ENCODE measurements at regions of chr17 and their contacts with region 1.

Region 1: DNA sequence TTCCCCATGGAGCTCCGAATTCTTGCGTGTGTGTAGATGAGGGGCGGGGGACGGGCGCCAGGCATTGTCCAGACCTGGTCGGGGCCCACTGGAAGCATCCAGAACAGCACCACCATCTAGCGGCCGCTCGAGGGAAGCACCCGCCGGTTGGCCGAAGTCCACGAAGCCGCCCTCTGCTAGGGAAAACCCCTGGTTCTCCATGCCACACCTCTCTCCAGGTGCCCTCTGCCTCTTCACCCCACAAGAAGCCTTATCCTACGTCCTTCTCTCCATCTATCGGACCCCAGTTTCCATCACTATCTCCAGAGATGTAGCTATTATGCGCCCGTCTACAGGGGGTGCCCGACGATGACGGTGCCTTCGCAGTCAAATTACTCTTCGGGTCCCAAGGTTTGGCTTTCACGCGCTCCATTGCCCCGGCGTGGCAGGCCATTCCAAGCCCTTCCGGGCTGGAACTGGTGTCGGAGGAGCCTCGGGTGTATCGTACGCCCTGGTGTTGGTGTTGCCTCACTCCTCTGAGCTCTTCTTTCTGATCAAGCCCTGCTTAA is 617 bp upstream of the SENP3 start:
- DNase-seq: peak; percentile 98
- H3K4me3 ChIP-seq: peak overlapping the region; percentile 73 to 97 (median 86)
- H3K27ac ChIP-seq: peak overlapping the region; percentile 89 to 98 (median 97)
- H3K4me1 ChIP-seq: peaks cover 0 to 70% (median 64%) of the 10 kb centered on the region in 4 donors
- H3K27me3 ChIP-seq: no peaks in the 10 kb centered on the region
- CTCF ChIP-seq: peak; percentile 86 to 96 (median 89)
- EP300 ChIP-seq: no peak
- POLR2A ChIP-seq: no peak

Region 2: DNA sequence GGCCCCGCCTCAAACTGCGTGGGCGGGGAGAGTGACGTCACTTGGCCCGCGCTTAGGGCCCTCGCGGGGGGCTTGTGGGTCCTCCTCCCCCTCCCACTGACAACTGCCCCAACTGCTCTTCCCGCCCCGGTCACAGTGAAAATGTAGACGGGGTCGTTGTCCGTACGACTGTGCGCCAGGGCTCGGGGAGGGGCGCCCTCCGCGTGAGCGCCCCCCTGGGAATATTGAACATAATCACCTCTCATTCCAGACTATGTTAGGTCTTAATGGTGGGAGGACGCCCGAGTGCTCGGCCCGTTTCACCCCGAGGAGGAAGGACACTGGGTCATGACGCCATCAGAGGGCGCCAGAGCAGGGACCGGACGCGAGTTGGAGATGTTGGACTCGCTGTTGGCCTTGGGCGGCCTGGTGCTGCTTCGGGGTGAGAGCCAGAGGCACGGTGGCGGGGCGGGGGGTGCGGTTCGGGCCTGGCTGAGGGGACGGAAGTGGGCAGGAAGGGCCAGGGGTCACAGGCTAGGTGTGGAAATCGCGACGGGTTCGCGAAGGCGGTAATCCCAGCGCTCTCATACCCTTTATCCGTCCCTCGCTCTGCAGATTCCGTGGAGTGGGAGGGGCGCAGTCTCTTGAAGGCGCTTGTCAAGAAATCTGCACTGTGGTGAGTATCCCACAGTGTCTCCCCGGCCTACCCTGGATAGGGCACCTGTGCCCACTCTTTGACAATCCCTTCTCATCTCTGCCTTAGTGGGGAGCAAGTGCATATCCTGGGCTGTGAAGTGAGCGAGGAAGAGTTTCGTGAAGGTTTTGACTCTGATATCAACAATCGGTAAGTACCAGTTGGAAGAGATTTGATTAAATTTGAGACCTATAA is 308.7 kb before region 1 on chr17 and contains the start of gene ELP5:
- intact Hi-C with region 1: loop called (anchors 10 kb)
- DNase-seq: peak; percentile 97
- H3K4me3 ChIP-seq: peak within 1 kb of the TSS; percentile 79 to 99 (median 88)
- H3K27ac ChIP-seq: peak within 1 kb of the TSS; percentile 97 to 99 (median 98)
- H3K4me1 ChIP-seq: peaks cover 0 to 43% (median 35%) of the 10 kb centered on the region in 4 donors
- H3K27me3 ChIP-seq: no peaks in the 10 kb centered on the region
- CTCF ChIP-seq: no peak
- EP300 ChIP-seq: peak in 2 of 4 donors; percentile 38 to 41
- POLR2A ChIP-seq: no peak
- total RNA-seq, gene ELP5: 28.4 to 40.0 (median 34.2) TPM

Region 3: GRCh38 chr17:7351665-7352501 is 209.2 kb before region 1 on chr17 and contains the start of gene KCTD11:
- intact Hi-C with region 1: loop called (anchors 2 kb)
- DNase-seq: peak; percentile 95
- H3K4me3 ChIP-seq: peak within 1 kb of the TSS; percentile 71 to 91 (median 86)
- H3K27ac ChIP-seq: peak within 1 kb of the TSS; percentile 93 to 100 (median 98)
- H3K4me1 ChIP-seq: peaks cover 0 to 66% (median 50%) of the 10 kb centered on the region in 4 donors
- H3K27me3 ChIP-seq: no peaks in the 10 kb centered on the region
- CTCF ChIP-seq: no peak
- EP300 ChIP-seq: peak in 1 of 4 donors; percentile 23
- POLR2A ChIP-seq: peak; percentile 36 to 53
- total RNA-seq, gene KCTD11: 4.4 to 6.4 (median 5.5) TPM

Region 4: GRCh38 chr17:7436351-7437206 is 124.5 kb before region 1 on chr17:
- intact Hi-C with region 1: loop called (anchors 2 kb)
- DNase-seq: peak; percentile 87
- H3K4me3 ChIP-seq: peak overlapping the region in 3 of 4 donors; percentile 32 to 43 (median 37)
- H3K27ac ChIP-seq: peak overlapping the region; percentile 44 to 73 (median 58)
- H3K4me1 ChIP-seq: peaks cover 0 to 58% (median 51%) of the 10 kb centered on the region in 4 donors
- H3K27me3 ChIP-seq: peaks cover 44 to 71% (median 70%) of the 10 kb centered on the region in 3 donors
- CTCF ChIP-seq: peak; percentile 23 to 86 (median 68)
- EP300 ChIP-seq: no peak
- POLR2A ChIP-seq: no peak

Region 5: GRCh38 chr17:7515911-7516610 is 45.0 kb before region 1 on chr17:
- intact Hi-C with region 1: loop called (anchors 1 kb)
- DNase-seq: no peak
- H3K4me3 ChIP-seq: no peak overlapping the region
- H3K27ac ChIP-seq: no peak overlapping the region
- H3K4me1 ChIP-seq: no peaks in the 10 kb centered on the region
- H3K27me3 ChIP-seq: no peaks in the 10 kb centered on the region
- CTCF ChIP-seq: no peak
- EP300 ChIP-seq: no peak
- POLR2A ChIP-seq: no peak

Region 6: GRCh38 chr17:7627250-7628121 is 66.4 kb after region 1 on chr17 and contains the start of gene SAT2:
- intact Hi-C with region 1: no loop called
- DNase-seq: peak; percentile 99
- H3K4me3 ChIP-seq: peak within 1 kb of the TSS; percentile 62 to 86 (median 77)
- H3K27ac ChIP-seq: peak within 1 kb of the TSS; percentile 89 to 97 (median 96)
- H3K4me1 ChIP-seq: peaks cover 0 to 17% (median 14%) of the 10 kb centered on the region in 4 donors
- H3K27me3 ChIP-seq: no peaks in the 10 kb centered on the region
- CTCF ChIP-seq: no peak
- EP300 ChIP-seq: peak in 1 of 4 donors; percentile 14
- POLR2A ChIP-seq: peak; percentile 69 to 75
- total RNA-seq, gene SAT2: 72.9 to 116 (median 99.2) TPM

Measured in sigmoid colon (tissue), 7 donors.